CD8-positive, alpha-beta T cell (primary cell): ENCODE measurements at regions of chr6 and their contacts with region 1.

Region 1: GRCh38 chr6:144246988-144247387 is 38.1 kb upstream of the UTRN start:
- DNase-seq: no peak
- ATAC-seq: no peak
- H3K4me3 ChIP-seq: no peak overlapping the region
- H3K4me3 Mint-ChIP-seq: no peak overlapping the region
- H3K27ac ChIP-seq: no peak overlapping the region
- H3K27ac Mint-ChIP-seq: no peak overlapping the region
- H3K4me1 ChIP-seq: no peaks in the 10 kb centered on the region
- H3K4me1 Mint-ChIP-seq: peaks cover 5% of the 10 kb centered on the region
- H3K27me3 ChIP-seq: peaks cover 0 to 2% of the 10 kb centered on the region in 2 experiments
- H3K27me3 Mint-ChIP-seq: peaks cover 6% of the 10 kb centered on the region
- CTCF ChIP-seq: no peak

Region 2: DNA sequence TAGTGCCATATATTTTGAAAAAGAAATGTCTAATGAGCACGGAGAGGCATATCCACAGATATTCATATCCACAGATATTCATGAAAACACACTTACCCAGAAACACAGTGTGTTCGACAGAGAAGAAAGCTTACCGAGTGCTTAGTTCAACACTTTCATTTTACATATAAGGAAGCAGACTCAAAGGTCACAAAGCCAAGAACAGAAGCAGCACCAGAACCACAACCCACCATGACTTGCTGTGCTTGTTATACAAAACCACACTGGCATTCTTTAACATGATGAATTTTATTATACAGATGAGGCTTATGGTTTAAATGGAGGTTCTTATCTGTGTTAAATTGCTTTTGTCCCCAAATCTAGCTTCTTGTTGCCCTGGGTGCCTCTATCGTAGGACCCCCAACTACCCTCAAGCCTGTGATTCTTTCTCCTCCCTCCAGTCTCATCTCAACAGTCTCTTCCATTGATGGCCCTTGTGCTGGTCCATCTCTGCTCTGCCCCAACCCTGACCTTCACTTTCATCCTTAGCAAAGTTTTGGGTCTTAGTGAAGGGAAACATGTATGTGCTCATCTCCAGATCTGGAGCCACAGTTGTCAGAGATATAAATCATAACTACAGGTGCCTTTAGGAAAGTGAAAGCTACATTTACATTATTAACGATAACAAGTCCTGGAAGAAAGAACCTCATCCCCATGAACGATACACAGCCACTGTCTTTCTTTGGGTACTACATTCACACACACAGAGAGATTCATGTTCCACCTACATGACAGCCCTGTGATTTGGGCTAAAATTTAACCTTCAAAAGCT is 191.7 kb before region 1 on chr6:
- CTCF ChIA-PET with region 1: no interaction called
- POLR2A ChIA-PET with region 1: no interaction called
- intact Hi-C with region 1: no loop called
- DNase-seq: peak in 6 of 9 experiments; percentile 30 to 84 (median 60)
- ATAC-seq: peak; percentile 98
- H3K4me3 ChIP-seq: peak overlapping the region; percentile 32 to 38
- H3K4me3 Mint-ChIP-seq: peak overlapping the region; percentile 82
- H3K27ac ChIP-seq: peak overlapping the region; percentile 32 to 80
- H3K27ac Mint-ChIP-seq: peak overlapping the region; percentile 94
- H3K4me1 ChIP-seq: peaks cover 20% of the 10 kb centered on the region
- H3K4me1 Mint-ChIP-seq: peaks cover 31% of the 10 kb centered on the region
- H3K27me3 ChIP-seq: no peaks in the 10 kb centered on the region
- H3K27me3 Mint-ChIP-seq: no peaks in the 10 kb centered on the region
- CTCF ChIP-seq: no peak

Region 3: DNA sequence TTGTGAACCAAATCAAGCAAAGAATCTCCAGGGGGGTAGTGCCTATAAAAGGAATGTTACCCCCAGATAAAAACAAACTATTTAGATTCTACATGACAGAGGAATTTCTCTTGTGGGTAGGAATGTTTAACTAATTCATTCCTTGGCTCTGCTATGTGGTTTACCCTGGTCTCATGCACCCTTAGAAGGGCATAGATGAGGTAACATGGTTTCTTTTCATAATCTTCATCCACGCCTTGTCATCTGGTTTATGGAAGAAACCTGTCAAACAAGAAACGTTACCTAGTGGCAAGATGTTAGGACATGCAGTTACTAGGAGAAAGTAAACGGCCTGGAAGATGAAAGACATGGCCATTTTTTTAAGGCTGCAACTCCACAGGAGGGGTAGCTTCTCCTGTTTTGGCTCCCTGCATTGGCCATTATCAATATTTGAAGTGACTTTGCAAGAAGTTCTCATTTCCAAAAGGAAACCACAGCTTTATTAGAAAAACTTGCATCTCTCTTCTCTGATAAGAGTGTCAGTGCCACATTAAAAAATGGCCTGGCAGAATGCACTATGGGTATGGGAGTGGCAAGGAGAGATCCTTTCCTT is 51.2 kb before region 1 on chr6:
- CTCF ChIA-PET with region 1: no interaction called
- POLR2A ChIA-PET with region 1: no interaction called
- intact Hi-C with region 1: loop called in 1 of 2 experiments (anchors 1 kb)
- DNase-seq: no peak
- ATAC-seq: no peak
- H3K4me3 ChIP-seq: no peak overlapping the region
- H3K4me3 Mint-ChIP-seq: no peak overlapping the region
- H3K27ac ChIP-seq: no peak overlapping the region
- H3K27ac Mint-ChIP-seq: no peak overlapping the region
- H3K4me1 ChIP-seq: peaks cover 6% of the 10 kb centered on the region
- H3K4me1 Mint-ChIP-seq: peaks cover 11% of the 10 kb centered on the region
- H3K27me3 ChIP-seq: no peaks in the 10 kb centered on the region
- H3K27me3 Mint-ChIP-seq: no peaks in the 10 kb centered on the region
- CTCF ChIP-seq: no peak

Region 4: DNA sequence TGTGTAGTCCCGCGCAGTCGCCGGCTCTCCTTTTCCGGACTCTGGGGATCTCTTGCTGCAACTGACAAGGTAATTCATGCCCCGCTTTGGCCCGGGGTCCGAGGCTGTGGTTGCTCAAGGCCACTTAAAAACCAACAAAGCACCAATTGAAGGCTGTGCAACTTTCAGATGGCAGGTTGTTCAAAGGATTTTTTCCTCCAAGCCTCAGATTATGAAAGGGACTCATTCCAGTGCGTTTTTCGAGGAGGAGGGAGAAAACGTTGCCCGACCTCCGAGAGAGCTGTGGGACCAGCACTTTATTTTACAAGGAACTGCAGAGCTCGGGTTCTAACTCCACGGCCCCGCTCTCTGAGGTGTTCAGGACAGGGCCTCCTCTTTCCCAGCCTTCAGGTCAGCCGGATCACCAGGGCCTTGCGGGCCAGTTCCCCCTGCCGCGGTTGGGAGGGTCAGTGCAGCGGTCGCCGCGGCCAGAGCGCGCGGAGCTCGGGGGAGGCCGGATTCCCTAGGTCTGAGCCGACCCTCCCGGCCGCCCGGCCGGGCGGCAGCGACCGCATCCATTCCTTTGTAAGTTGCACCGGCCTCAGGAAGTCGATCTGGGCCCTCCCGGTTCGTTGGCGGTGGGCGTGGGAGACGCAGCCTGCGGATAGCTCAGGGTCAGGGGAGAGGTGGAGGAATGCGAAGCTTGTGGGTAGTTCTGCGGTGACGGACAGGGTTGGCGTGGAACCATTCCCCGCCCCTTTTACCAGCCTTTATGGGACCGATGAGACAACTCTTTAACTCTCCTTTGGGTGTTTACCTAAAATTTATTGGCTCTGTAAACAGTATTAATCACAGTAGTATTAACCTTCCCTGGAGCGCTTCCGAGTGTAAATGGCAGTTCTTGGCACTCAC is 39.8 kb after region 1 on chr6:
- CTCF ChIA-PET with region 1: no interaction called
- POLR2A ChIA-PET with region 1: no interaction called
- intact Hi-C with region 1: no loop called
- DNase-seq: peak in 3 of 9 experiments; percentile 6 to 23 (median 16)
- ATAC-seq: no peak
- H3K4me3 ChIP-seq: peak overlapping the region; percentile 85 to 89
- H3K4me3 Mint-ChIP-seq: peak overlapping the region; percentile 91
- H3K27ac ChIP-seq: no peak overlapping the region
- H3K27ac Mint-ChIP-seq: no peak overlapping the region
- H3K4me1 ChIP-seq: peaks cover 8% of the 10 kb centered on the region
- H3K4me1 Mint-ChIP-seq: peaks cover 26% of the 10 kb centered on the region
- H3K27me3 ChIP-seq: no peaks in the 10 kb centered on the region
- H3K27me3 Mint-ChIP-seq: peaks cover 6% of the 10 kb centered on the region
- CTCF ChIP-seq: no peak

Region 5: GRCh38 chr6:144515761-144516160 is 268.8 kb after region 1 on chr6:
- CTCF ChIA-PET with region 1: no interaction called
- POLR2A ChIA-PET with region 1: no interaction called
- intact Hi-C with region 1: no loop called
- DNase-seq: no peak
- ATAC-seq: no peak
- H3K4me3 ChIP-seq: no peak overlapping the region
- H3K4me3 Mint-ChIP-seq: no peak overlapping the region
- H3K27ac ChIP-seq: no peak overlapping the region
- H3K27ac Mint-ChIP-seq: peak overlapping the region; percentile 60
- H3K4me1 ChIP-seq: no peaks in the 10 kb centered on the region
- H3K4me1 Mint-ChIP-seq: peaks cover 2% of the 10 kb centered on the region
- H3K27me3 ChIP-seq: no peaks in the 10 kb centered on the region
- H3K27me3 Mint-ChIP-seq: no peaks in the 10 kb centered on the region
- CTCF ChIP-seq: no peak